Transverse colon (tissue), 4 donors: ENCODE measurements at regions of chr19 and their contacts with region 1.

Region 1: GRCh38 chr19:43555185-43555770 is 20.0 kb downstream of the XRCC1 start:
- DNase-seq: peak; percentile 79
- H3K4me3 ChIP-seq: no peak overlapping the region
- H3K27ac ChIP-seq: no peak overlapping the region
- H3K4me1 ChIP-seq: no peaks in the 10 kb centered on the region
- H3K27me3 ChIP-seq: no peaks in the 10 kb centered on the region
- CTCF ChIP-seq: peak; percentile 44 to 68 (median 54)
- EP300 ChIP-seq: no peak
- POLR2A ChIP-seq: no peak

Region 2: DNA sequence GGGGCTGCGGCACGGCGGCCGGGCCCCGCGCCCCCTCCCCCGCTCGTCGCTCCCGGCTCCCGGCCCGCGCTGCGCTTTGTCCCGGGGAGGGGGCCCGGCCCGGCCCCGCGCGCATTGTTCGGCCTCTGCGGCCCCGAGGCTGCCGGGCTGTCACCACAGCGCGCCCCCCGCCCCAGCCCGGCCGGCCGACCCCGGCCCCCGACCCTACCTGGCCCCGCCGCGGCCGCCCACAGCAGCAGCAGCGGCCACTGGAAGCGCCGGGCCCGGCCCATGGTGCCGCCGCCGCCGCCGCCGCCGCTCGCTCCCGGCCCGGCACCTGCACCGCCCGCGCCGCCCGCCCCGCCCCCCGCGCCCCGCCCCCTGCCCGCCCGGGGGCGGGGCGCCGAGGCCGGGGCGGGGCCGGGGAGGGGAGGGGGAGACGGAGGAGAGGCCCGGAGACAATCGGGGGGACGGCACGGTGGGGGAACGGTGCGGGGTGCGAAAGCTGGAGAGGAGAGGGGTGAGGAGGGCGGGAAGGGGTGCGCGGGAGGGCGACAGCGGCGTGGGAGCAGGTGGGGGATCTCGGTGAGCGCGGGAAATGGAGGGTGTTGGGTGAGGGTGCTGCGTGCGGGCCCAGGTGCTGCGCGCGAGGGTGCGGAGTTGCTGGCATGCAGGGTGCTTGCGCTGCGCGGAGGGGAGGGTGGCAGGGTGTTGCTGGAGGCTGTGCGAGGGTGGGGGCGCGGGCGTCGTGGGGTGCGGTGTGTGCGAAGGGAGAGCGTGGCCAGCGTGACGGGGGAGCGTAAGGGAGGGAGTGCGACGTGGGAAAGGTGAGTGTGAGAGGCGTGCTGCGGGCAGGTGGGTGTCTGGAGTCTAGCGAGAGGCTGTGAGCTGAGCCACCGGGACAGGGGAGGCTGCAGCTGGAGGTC is 84.5 kb after region 1 on chr19 and contains the start of gene CADM4:
- in situ Hi-C with region 1: loop called in 1 of 4 experiments (anchors 10 kb)
- intact Hi-C with region 1: no loop called
- DNase-seq: peak; percentile 44
- H3K4me3 ChIP-seq: peak within 1 kb of the TSS; percentile 40 to 54 (median 50)
- H3K27ac ChIP-seq: peak within 1 kb of the TSS in 2 of 4 donors; percentile 48 to 57
- H3K4me1 ChIP-seq: peaks cover 6 to 14% (median 10%) of the 10 kb centered on the region in 4 donors
- H3K27me3 ChIP-seq: peaks cover 42% of the 10 kb centered on the region
- CTCF ChIP-seq: no peak
- EP300 ChIP-seq: no peak
- POLR2A ChIP-seq: no peak
- total RNA-seq, gene CADM4: 2.5 to 4.0 (median 3.7) TPM in 3 of 4 donors, not detected in the other